H1 (cell line): ENCODE measurements at regions of chr4 and their contacts with region 1.

Region 1: DNA sequence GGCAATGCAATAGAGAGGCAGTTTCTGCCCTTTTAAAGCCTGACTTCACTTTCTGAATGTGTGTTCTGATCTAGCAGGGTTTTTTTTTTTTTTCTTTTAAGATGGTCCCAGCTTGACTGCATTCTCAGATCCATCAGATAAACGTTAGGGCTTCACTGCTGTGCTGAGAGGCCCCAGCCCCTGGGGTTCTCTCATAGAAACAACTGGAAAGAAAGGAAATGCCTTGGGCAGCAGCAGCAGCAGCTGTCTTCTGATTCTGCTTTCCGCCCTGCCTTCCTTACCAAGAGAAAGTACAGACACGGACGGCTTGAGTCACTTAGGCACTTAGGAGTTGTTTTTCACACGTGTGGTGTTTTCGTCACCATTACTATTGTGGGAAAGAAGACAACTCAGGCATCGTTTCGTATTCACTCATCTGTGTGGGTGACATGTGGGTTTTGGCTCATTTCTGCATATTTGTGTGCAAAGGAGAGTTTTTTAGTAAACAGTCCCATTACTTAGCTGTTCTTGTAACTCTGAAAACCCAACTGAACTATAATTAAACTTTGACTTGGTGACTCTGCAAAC is 172.0 kb downstream of the PTTG2 start:
- DNase-seq: no peak
- H3K4me3 ChIP-seq: no peak overlapping the region
- H3K27ac ChIP-seq: no peak overlapping the region
- H3K4me1 ChIP-seq: peaks cover 11 to 30% (median 14%) of the 10 kb centered on the region in 4 experiments; a peak in 6 of 7 replicates
- H3K27me3 ChIP-seq: peaks cover 0 to 31% (median 25%) of the 10 kb centered on the region in 4 experiments; a peak in 6 of 7 replicates
- CTCF ChIP-seq: no peak
- EP300 ChIP-seq: no peak
- POLR2A ChIP-seq: no peak
- RAD21 ChIP-seq: no peak

Region 2: GRCh38 chr4:37864786-37865185 is 267.4 kb before region 1 on chr4:
- CTCF ChIA-PET with region 1: no interaction called
- POLR2A ChIA-PET with region 1: no interaction called
- DNase-seq: no peak
- H3K4me3 ChIP-seq: no peak overlapping the region
- H3K27ac ChIP-seq: no peak overlapping the region
- H3K4me1 ChIP-seq: no peaks in the 10 kb centered on the region
- H3K27me3 ChIP-seq: no peaks in the 10 kb centered on the region
- CTCF ChIP-seq: no peak
- EP300 ChIP-seq: no peak
- POLR2A ChIP-seq: no peak
- RAD21 ChIP-seq: no peak

Region 3: GRCh38 chr4:38023347-38024205 is 108.6 kb before region 1 on chr4:
- CTCF ChIA-PET with region 1: no interaction called
- POLR2A ChIA-PET with region 1: no interaction called
- DNase-seq: no peak
- H3K4me3 ChIP-seq: no peak overlapping the region
- H3K27ac ChIP-seq: no peak overlapping the region
- H3K4me1 ChIP-seq: no peaks in the 10 kb centered on the region
- H3K27me3 ChIP-seq: no peaks in the 10 kb centered on the region
- CTCF ChIP-seq: no peak
- EP300 ChIP-seq: no peak
- POLR2A ChIP-seq: no peak
- RAD21 ChIP-seq: no peak

Region 4: GRCh38 chr4:38084877-38085711 is 47.1 kb before region 1 on chr4:
- CTCF ChIA-PET with region 1: interaction called, 10 read pairs
- POLR2A ChIA-PET with region 1: interaction called, 3 read pairs
- DNase-seq: no peak
- H3K4me3 ChIP-seq: no peak overlapping the region
- H3K27ac ChIP-seq: no peak overlapping the region
- H3K4me1 ChIP-seq: peaks cover 7 to 19% (median 14%) of the 10 kb centered on the region in 4 experiments; a peak in 5 of 7 replicates
- H3K27me3 ChIP-seq: no peaks in the 10 kb centered on the region
- CTCF ChIP-seq: no peak
- EP300 ChIP-seq: no peak
- POLR2A ChIP-seq: no peak
- RAD21 ChIP-seq: no peak

Region 5: GRCh38 chr4:38119668-38120385 is 12.4 kb before region 1 on chr4:
- CTCF ChIA-PET with region 1: interaction called, 10 read pairs
- POLR2A ChIA-PET with region 1: no interaction called
- DNase-seq: no peak
- H3K4me3 ChIP-seq: no peak overlapping the region
- H3K27ac ChIP-seq: no peak overlapping the region
- H3K4me1 ChIP-seq: peaks cover 0 to 4% (median under 1%) of the 10 kb centered on the region in 4 experiments; a peak in 3 of 7 replicates
- H3K27me3 ChIP-seq: no peaks in the 10 kb centered on the region
- CTCF ChIP-seq: no peak
- EP300 ChIP-seq: no peak
- POLR2A ChIP-seq: no peak
- RAD21 ChIP-seq: no peak